PC-9 (cell line): ENCODE measurements at regions of chrX and their contacts with region 1.

Region 1: DNA sequence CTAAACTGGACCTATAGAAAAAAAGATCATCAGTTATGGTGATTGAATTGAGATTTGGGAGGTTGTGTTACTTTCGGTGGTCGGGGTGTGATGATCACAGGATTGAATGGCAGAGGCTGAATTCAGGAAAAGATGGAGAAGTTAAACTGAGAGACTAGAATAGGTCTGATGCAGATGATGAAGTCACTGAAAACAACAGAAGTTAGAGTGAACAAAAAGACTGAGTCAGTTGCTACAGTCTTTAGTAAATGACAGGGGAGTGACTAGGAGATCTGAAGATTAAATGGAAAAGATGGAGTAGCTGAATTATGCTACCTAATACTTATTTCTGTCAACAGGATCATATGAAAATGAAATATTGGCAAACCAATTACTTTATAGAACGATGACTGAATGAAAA is 163.2 kb downstream of the RPA4 start:
- DNase-seq: no peak
- H3K4me3 ChIP-seq: no peak overlapping the region
- H3K27ac ChIP-seq: no peak overlapping the region
- H3K4me1 ChIP-seq: no peaks in the 10 kb centered on the region
- H3K27me3 ChIP-seq: no peaks in the 10 kb centered on the region
- CTCF ChIP-seq: no peak

Region 2: GRCh38 chrX:96729053-96729452 is 317.8 kb before region 1 on chrX:
- CTCF ChIA-PET with region 1: no interaction called
- POLR2A ChIA-PET with region 1: no interaction called
- intact Hi-C with region 1: no loop called
- DNase-seq: no peak
- H3K4me3 ChIP-seq: no peak overlapping the region
- H3K27ac ChIP-seq: no peak overlapping the region
- H3K4me1 ChIP-seq: no peaks in the 10 kb centered on the region
- H3K27me3 ChIP-seq: no peaks in the 10 kb centered on the region
- CTCF ChIP-seq: no peak

Region 3: DNA sequence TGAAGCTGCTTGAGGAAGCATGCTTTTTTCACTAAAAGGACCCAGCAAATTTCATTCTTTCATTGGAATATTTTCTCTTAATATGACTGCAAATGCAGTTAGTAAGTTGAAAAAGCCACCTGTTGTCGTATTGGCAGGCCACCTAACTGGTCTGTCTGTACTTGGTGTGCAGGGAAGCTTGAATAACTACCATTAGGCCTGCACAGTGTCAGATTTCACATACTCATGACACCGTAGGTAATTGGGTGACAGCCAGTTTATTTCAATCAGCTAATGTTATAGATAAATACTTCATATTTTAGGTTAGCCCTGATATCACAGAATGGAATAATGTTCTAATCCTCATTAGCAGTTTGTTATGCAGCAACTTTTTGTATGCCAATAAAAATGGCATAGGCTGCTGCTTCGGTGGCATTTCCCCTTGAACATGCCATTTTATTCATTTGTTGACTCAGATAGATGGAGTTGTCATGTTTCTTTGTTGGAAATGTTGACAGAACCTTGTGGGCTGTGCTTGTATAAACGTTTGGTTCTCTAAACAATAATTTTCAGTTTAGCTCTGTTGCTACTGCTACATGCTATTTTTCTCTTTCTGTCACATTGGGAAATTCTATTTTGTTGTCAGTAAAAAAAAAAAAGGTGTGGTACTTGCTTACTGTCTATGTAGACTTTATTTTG is 10.6 kb after region 1 on chrX:
- CTCF ChIA-PET with region 1: no interaction called
- POLR2A ChIA-PET with region 1: interaction called, 12 read pairs
- intact Hi-C with region 1: no loop called
- DNase-seq: peak; percentile 16 to 59
- H3K4me3 ChIP-seq: no peak overlapping the region
- H3K27ac ChIP-seq: no peak overlapping the region
- H3K4me1 ChIP-seq: peaks cover 14% of the 10 kb centered on the region
- H3K27me3 ChIP-seq: no peaks in the 10 kb centered on the region
- CTCF ChIP-seq: no peak